CD4-positive, alpha-beta T cell (primary cell): ENCODE measurements at regions of chr21 and their contacts with region 1.

Region 1: GRCh38 chr21:42400525-42400924 is 3.2 kb upstream of the UBASH3A start:
- DNase-seq: peak in 3 of 14 experiments; percentile 39 to 58 (median 54)
- ATAC-seq: no peak
- H3K4me3 ChIP-seq: no peak overlapping the region
- H3K4me3 Mint-ChIP-seq: peak overlapping the region; percentile 57
- H3K27ac ChIP-seq: no peak overlapping the region
- H3K27ac Mint-ChIP-seq: peak overlapping the region; percentile 79
- H3K4me1 ChIP-seq: peaks cover 47% of the 10 kb centered on the region
- H3K4me1 Mint-ChIP-seq: peaks cover 68% of the 10 kb centered on the region
- H3K27me3 ChIP-seq: no peaks in the 10 kb centered on the region
- H3K27me3 Mint-ChIP-seq: no peaks in the 10 kb centered on the region
- CTCF ChIP-seq: no peak

Region 2: DNA sequence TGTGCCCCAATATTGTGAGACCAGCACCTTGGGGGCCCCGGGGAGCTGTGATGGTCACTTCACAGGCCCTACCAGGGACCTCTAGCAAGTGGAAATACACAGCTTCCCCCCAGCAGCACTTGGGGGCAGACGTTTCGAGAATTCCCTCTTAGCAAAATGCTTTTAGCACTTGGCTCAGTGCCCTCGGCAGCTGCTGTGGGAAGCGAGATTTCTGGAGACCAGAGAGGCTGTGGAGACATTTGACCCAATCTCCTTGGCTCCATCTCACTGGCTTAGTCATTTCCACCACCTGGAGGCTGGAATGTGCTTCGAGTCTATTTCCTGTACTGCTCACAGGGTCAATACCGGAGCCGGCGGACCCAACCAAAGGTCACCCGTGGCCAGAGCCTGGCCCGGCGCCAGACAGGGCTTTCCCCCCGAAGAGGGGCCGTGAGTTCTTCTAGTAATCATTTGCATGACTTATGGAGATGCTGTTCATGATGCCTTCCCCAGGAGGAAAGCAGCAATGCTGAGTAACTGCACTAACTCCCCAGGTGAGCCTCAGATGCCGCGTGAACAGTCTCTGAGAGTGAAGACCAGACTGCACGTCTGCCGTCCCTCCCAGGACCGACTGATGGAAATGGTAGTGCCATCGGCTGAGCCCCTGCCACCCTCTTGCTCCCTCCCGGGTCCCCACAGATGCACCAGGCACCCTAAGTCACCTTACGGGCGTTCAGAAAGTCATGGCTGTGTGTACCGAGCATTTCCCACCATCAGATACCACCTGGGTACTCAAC is 442.3 kb before region 1 on chr21:
- CTCF ChIA-PET with region 1: no interaction called
- POLR2A ChIA-PET with region 1: no interaction called
- intact Hi-C with region 1: no loop called
- DNase-seq: no peak
- ATAC-seq: no peak
- H3K4me3 ChIP-seq: no peak overlapping the region
- H3K4me3 Mint-ChIP-seq: no peak overlapping the region
- H3K27ac ChIP-seq: no peak overlapping the region
- H3K27ac Mint-ChIP-seq: no peak overlapping the region
- H3K4me1 ChIP-seq: peaks cover 11% of the 10 kb centered on the region
- H3K4me1 Mint-ChIP-seq: peaks cover 14% of the 10 kb centered on the region
- H3K27me3 ChIP-seq: peaks cover 11% of the 10 kb centered on the region in 2 experiments
- H3K27me3 Mint-ChIP-seq: peaks cover 20% of the 10 kb centered on the region
- CTCF ChIP-seq: no peak

Region 3: GRCh38 chr21:42381334-42381984 is 19.1 kb before region 1 on chr21:
- CTCF ChIA-PET with region 1: interaction called, 11 read pairs
- POLR2A ChIA-PET with region 1: interaction called, 13 read pairs
- intact Hi-C with region 1: no loop called
- DNase-seq: peak in 10 of 14 experiments; percentile 24 to 70 (median 38)
- ATAC-seq: peak; percentile 56
- H3K4me3 ChIP-seq: no peak overlapping the region
- H3K4me3 Mint-ChIP-seq: no peak overlapping the region
- H3K27ac ChIP-seq: no peak overlapping the region
- H3K27ac Mint-ChIP-seq: no peak overlapping the region
- H3K4me1 ChIP-seq: peaks cover 15% of the 10 kb centered on the region
- H3K4me1 Mint-ChIP-seq: peaks cover 20% of the 10 kb centered on the region
- H3K27me3 ChIP-seq: no peaks in the 10 kb centered on the region
- H3K27me3 Mint-ChIP-seq: no peaks in the 10 kb centered on the region
- CTCF ChIP-seq: peak; percentile 42

Region 4: GRCh38 chr21:42424914-42425541 is 24.5 kb after region 1 on chr21:
- CTCF ChIA-PET with region 1: interaction called, 9 read pairs
- POLR2A ChIA-PET with region 1: interaction called, 208 read pairs
- intact Hi-C with region 1: loop called in 1 of 2 experiments (anchors 1 kb)
- DNase-seq: peak; percentile 63 to 92 (median 76)
- ATAC-seq: peak; percentile 86
- H3K4me3 ChIP-seq: peak overlapping the region; percentile 13
- H3K4me3 Mint-ChIP-seq: peak overlapping the region; percentile 59
- H3K27ac ChIP-seq: peak overlapping the region; percentile 78 to 90
- H3K27ac Mint-ChIP-seq: peak overlapping the region; percentile 85
- H3K4me1 ChIP-seq: peaks cover 83% of the 10 kb centered on the region
- H3K4me1 Mint-ChIP-seq: peaks cover 79% of the 10 kb centered on the region
- H3K27me3 ChIP-seq: no peaks in the 10 kb centered on the region
- H3K27me3 Mint-ChIP-seq: no peaks in the 10 kb centered on the region
- CTCF ChIP-seq: no peak

Region 5: DNA sequence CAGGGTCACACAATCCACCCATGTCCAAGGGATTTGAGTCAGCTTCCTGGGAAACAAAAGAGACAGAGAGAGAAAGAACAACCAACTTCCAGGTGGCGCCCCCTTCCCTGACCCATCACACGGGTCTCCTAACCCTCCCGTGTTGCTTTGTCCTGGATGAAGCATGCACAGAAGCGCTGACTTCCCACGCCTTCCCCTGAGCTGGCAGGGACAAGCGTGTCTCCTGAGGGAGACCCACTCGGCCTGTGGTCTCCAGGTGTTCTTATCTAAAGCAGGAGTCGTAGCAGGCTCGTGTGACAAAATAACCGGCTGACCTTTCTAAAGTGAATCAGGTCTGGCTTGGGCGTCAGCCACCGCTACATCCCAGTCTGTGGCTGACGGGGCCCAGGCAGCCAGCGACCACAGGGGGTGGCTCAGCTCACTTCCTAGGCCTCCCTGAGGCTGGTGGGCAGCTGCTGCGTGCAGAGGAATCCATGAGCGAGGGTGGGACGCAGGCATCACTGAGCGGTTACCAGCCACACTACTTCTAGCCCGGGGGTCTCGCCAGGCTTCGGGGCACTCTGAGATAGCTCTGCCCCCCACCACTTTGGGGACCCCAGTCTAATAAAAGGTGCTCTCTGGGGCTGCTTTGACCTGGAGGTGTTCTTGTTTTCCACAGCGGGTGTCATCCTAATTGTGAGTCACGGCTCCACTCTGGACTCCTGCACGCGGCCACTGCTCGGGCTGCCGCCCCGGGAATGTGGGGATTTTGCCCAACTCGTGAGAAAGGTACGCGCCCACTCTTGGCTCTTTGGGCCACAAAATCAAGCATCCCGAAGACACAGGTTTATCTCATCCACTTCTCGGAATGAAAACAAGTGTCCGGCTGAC is 43.6 kb after region 1 on chr21:
- CTCF ChIA-PET with region 1: no interaction called
- POLR2A ChIA-PET with region 1: interaction called, 11 read pairs
- intact Hi-C with region 1: loop called in 1 of 2 experiments (anchors 5 kb)
- DNase-seq: no peak
- ATAC-seq: no peak
- H3K4me3 ChIP-seq: no peak overlapping the region
- H3K4me3 Mint-ChIP-seq: no peak overlapping the region
- H3K27ac ChIP-seq: no peak overlapping the region
- H3K27ac Mint-ChIP-seq: peak overlapping the region; percentile 30
- H3K4me1 ChIP-seq: peaks cover 15% of the 10 kb centered on the region
- H3K4me1 Mint-ChIP-seq: peaks cover 41% of the 10 kb centered on the region
- H3K27me3 ChIP-seq: no peaks in the 10 kb centered on the region
- H3K27me3 Mint-ChIP-seq: no peaks in the 10 kb centered on the region
- CTCF ChIP-seq: no peak